ENCODE measurements at regions of chr16 and their contacts with region 1.

Region 1: GRCh38 chr16:27969574-27969973 is 93.9 kb downstream of the GSG1L start:
- DNase-seq: no peak
- H3K4me3 ChIP-seq: no peak overlapping the region
- H3K27ac ChIP-seq: no peak overlapping the region
- H3K4me1 ChIP-seq: no peaks in the 10 kb centered on the region
- H3K27me3 ChIP-seq: no peaks in the 10 kb centered on the region
- CTCF ChIP-seq: no peak
- EP300 ChIP-seq: no peak
- POLR2A ChIP-seq: no peak

Region 2: DNA sequence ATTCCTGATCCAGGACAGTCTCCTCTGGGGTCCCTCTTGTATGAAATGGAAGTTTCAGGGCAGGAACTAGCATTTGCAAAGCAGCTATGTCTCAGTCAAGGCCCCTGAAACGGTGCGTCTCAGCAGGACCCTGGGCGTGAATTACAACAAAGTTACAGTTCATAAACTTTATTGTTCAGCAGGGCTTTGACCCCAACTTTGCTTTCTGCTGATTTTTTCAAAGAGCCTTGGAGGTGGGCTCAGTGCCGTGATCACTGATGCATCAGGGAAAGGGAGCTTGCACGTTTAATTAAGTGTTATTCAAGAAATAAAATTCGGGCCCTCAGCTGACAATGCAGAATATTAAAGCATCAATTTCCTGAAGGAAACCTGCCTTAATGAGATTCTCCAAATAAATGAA is 1162.9 kb before region 1 on chr16:
- in situ Hi-C with region 1: no loop called
- intact Hi-C with region 1: loop called (anchors 5 kb)
- DNase-seq: no peak
- H3K4me3 ChIP-seq: no peak overlapping the region
- H3K27ac ChIP-seq: no peak overlapping the region
- H3K4me1 ChIP-seq: no peaks in the 10 kb centered on the region
- H3K27me3 ChIP-seq: no peaks in the 10 kb centered on the region
- CTCF ChIP-seq: no peak
- EP300 ChIP-seq: no peak
- POLR2A ChIP-seq: no peak

Region 3: DNA sequence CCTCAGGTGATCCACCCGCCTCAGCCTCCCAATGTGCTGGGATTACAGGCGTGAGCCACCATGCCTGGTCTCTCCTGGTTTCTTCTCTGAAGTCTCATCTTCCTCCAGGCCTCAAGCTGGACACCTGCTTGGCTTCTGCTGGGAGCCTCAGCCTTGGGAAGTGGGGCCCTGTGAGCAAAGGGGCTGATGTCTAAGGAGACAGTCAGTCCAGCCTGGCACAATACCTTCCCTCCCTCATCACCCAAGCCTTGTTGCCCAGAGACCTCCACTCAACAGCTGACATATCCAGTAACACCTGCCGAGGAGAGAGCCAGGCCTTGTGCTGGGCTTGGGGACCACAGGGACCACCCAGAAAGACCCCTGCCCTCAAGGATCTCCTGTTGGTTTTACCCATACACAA is 157.7 kb before region 1 on chr16:
- in situ Hi-C with region 1: no loop called
- intact Hi-C with region 1: no loop called
- DNase-seq: no peak
- H3K4me3 ChIP-seq: no peak overlapping the region
- H3K27ac ChIP-seq: no peak overlapping the region
- H3K4me1 ChIP-seq: no peaks in the 10 kb centered on the region
- H3K27me3 ChIP-seq: no peaks in the 10 kb centered on the region
- CTCF ChIP-seq: no peak
- EP300 ChIP-seq: no peak
- POLR2A ChIP-seq: no peak

Region 4: GRCh38 chr16:28193530-28194423 is 224.2 kb after region 1 on chr16:
- in situ Hi-C with region 1: no loop called
- intact Hi-C with region 1: no loop called
- DNase-seq: no peak
- H3K4me3 ChIP-seq: no peak overlapping the region
- H3K27ac ChIP-seq: peak overlapping the region; percentile 40 to 57 (median 47)
- H3K4me1 ChIP-seq: peaks cover 0 to 43% (median 13%) of the 10 kb centered on the region in 4 donors
- H3K27me3 ChIP-seq: no peaks in the 10 kb centered on the region
- CTCF ChIP-seq: no peak
- EP300 ChIP-seq: no peak
- POLR2A ChIP-seq: no peak

Region 5: GRCh38 chr16:29802416-29802935 is 1832.9 kb after region 1 on chr16:
- in situ Hi-C with region 1: no loop called
- intact Hi-C with region 1: no loop called
- DNase-seq: no peak
- H3K4me3 ChIP-seq: no peak overlapping the region
- H3K27ac ChIP-seq: no peak overlapping the region
- H3K4me1 ChIP-seq: peaks cover 4 to 17% (median 8%) of the 10 kb centered on the region in 4 donors
- H3K27me3 ChIP-seq: no peaks in the 10 kb centered on the region
- CTCF ChIP-seq: no peak
- EP300 ChIP-seq: no peak
- POLR2A ChIP-seq: no peak